B cell (primary cell): ENCODE measurements at regions of chr6 and their contacts with region 1.

Region 1: GRCh38 chr6:108848116-108848868 is at the start of gene ARMC2:
- DNase-seq: peak; percentile 95
- ATAC-seq: peak; percentile 93
- H3K4me3 ChIP-seq: peak within 1 kb of the TSS; percentile 53 to 85 (median 78)
- H3K4me3 Mint-ChIP-seq: peak within 1 kb of the TSS; percentile 93
- H3K27ac ChIP-seq: peak within 1 kb of the TSS; percentile 48 to 77
- H3K27ac Mint-ChIP-seq: peak within 1 kb of the TSS; percentile 94
- H3K4me1 ChIP-seq: peaks cover 9 to 12% of the 10 kb centered on the region in 2 donors
- H3K4me1 Mint-ChIP-seq: peaks cover 13% of the 10 kb centered on the region
- H3K27me3 ChIP-seq: peaks cover 0 to 2% (median 0%) of the 10 kb centered on the region in 4 experiments
- H3K27me3 Mint-ChIP-seq: no peaks in the 10 kb centered on the region
- CTCF ChIP-seq: no peak
- total RNA-seq, gene ARMC2: 4.9 and 9.9 TPM in 2 replicates

Region 2: DNA sequence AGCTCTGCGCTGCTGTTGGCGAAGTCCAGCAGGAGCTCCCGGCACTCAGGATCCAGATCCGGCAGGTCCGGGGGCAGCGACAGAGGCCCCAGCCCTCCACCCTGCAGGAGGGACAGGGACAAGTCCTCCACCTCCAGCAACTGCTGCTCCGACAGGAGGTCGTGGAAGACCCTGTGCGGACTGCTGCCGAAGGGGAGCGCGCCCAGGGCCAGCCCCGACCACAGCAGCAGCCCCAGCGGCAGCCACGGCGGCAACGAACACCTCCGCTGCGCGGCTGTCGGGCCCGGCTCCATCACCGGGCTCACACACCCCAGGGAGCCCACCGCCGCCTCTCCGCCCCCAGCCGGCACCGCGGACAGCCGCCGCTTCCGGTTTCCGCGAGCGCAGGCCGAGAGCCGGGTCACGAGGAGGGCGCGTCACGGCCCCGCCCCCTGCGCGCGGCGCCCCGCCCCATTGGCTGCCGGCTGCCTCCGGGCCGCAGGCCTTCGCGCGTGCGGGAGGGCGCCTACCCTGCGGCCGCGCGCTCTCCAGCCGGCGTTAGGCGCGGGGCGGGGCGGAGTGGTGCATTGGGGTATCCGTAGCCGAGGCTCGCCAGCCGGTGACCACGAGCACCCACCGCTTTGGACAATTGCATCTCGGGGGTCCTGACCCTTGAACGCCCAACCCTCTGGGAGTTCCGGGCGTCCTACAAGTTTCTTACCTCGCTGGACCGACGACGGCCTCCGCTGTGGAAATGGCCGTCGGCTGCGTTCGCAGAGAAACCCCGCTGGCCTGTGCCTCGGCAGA is 773.7 kb before region 1 on chr6 and contains the start of gene OSTM1:
- CTCF ChIA-PET with region 1: no interaction called
- POLR2A ChIA-PET with region 1: no interaction called
- intact Hi-C with region 1: loop called (anchors 1 kb)
- DNase-seq: peak; percentile 95
- ATAC-seq: peak; percentile 96
- H3K4me3 ChIP-seq: peak within 1 kb of the TSS; percentile 75 to 96 (median 90)
- H3K4me3 Mint-ChIP-seq: peak within 1 kb of the TSS; percentile 89
- H3K27ac ChIP-seq: peak within 1 kb of the TSS; percentile 78 to 91
- H3K27ac Mint-ChIP-seq: peak within 1 kb of the TSS; percentile 93
- H3K4me1 ChIP-seq: peaks cover 15 to 18% of the 10 kb centered on the region in 2 donors
- H3K4me1 Mint-ChIP-seq: peaks cover 29% of the 10 kb centered on the region
- H3K27me3 ChIP-seq: no peaks in the 10 kb centered on the region
- H3K27me3 Mint-ChIP-seq: peaks cover 5% of the 10 kb centered on the region
- CTCF ChIP-seq: no peak
- total RNA-seq, gene OSTM1: 33.2 and 41.7 TPM in 2 replicates

Region 3: GRCh38 chr6:108558372-108559096 is 289.8 kb before region 1 on chr6:
- CTCF ChIA-PET with region 1: interaction called, 5 read pairs
- POLR2A ChIA-PET with region 1: interaction called, 7 read pairs
- intact Hi-C with region 1: loop called (anchors 1 kb)
- DNase-seq: peak; percentile 99
- ATAC-seq: peak; percentile 64
- H3K4me3 ChIP-seq: peak overlapping the region; percentile 83 to 98 (median 96)
- H3K4me3 Mint-ChIP-seq: peak overlapping the region; percentile 100
- H3K27ac ChIP-seq: peak overlapping the region; percentile 100
- H3K27ac Mint-ChIP-seq: peak overlapping the region; percentile 100
- H3K4me1 ChIP-seq: peaks cover 17 to 20% of the 10 kb centered on the region in 2 donors
- H3K4me1 Mint-ChIP-seq: peaks cover 22% of the 10 kb centered on the region
- H3K27me3 ChIP-seq: peaks cover 0 to 6% (median 0%) of the 10 kb centered on the region in 4 experiments
- H3K27me3 Mint-ChIP-seq: peaks cover 5% of the 10 kb centered on the region
- CTCF ChIP-seq: no peak

Region 4: DNA sequence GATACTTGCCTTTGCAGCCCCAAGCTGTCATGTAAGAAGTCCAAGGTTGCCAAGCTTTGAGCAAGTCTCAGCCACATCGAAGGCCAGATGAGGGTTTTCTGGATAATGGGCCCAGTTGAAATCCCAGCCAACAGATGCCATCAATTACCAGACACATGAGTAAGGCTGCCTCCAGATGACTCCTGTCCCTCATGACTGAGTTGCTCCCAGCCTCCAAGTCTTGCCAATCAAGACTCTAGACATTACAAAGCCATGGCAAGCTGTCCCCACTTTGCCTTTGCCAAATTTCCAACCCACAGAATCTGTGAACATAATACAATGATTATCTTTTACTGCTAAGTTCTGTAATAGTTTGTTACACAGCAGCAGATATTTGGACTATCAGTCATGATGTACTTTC is 76.9 kb before region 1 on chr6:
- CTCF ChIA-PET with region 1: no interaction called
- POLR2A ChIA-PET with region 1: no interaction called
- intact Hi-C with region 1: no loop called
- DNase-seq: no peak
- ATAC-seq: no peak
- H3K4me3 ChIP-seq: no peak overlapping the region
- H3K4me3 Mint-ChIP-seq: no peak overlapping the region
- H3K27ac ChIP-seq: no peak overlapping the region
- H3K27ac Mint-ChIP-seq: no peak overlapping the region
- H3K4me1 ChIP-seq: no peaks in the 10 kb centered on the region
- H3K4me1 Mint-ChIP-seq: peaks cover 4% of the 10 kb centered on the region
- H3K27me3 ChIP-seq: peaks cover 0 to 3% (median 0%) of the 10 kb centered on the region in 4 experiments
- H3K27me3 Mint-ChIP-seq: peaks cover 15% of the 10 kb centered on the region
- CTCF ChIP-seq: no peak

Region 5: DNA sequence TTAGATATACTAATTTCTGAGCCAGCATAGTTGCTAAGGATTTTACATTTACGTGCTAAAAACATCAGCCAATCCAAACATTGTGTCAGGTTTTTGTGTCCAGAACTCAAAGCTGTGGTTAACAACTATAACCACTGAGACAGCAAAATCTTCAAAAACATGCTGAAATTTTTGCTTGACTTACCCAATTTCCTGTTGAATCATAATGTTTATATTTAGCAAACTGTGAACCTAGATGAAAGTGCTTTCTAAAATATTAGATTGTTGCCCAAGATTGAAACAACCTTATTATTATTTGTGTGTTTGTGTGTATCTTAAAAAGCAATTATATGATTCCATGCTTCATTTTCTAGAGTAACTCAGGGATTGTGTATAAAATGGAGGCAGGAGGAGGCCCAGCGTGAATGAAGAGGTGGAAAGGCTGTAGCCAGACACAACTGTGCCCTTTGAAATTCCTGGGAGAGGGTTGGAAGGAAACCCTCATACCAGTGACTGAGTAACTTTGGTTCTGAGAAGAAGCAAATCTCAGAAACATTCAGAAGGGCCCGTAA is 47.9 kb after region 1 on chr6:
- CTCF ChIA-PET with region 1: interaction called, 15 read pairs
- POLR2A ChIA-PET with region 1: no interaction called
- intact Hi-C with region 1: no loop called
- DNase-seq: no peak
- ATAC-seq: no peak
- H3K4me3 ChIP-seq: peak overlapping the region in 1 of 5 experiments; percentile 16
- H3K4me3 Mint-ChIP-seq: peak overlapping the region; percentile 2
- H3K27ac ChIP-seq: peak overlapping the region in 1 of 2 donors; percentile 39
- H3K27ac Mint-ChIP-seq: peak overlapping the region; percentile 2
- H3K4me1 ChIP-seq: peaks cover 22 to 28% of the 10 kb centered on the region in 2 donors
- H3K4me1 Mint-ChIP-seq: peaks cover 17% of the 10 kb centered on the region
- H3K27me3 ChIP-seq: no peaks in the 10 kb centered on the region
- H3K27me3 Mint-ChIP-seq: no peaks in the 10 kb centered on the region
- CTCF ChIP-seq: no peak

Region 6: GRCh38 chr6:109009236-109009961 is 161.1 kb after region 1 on chr6:
- CTCF ChIA-PET with region 1: no interaction called
- POLR2A ChIA-PET with region 1: no interaction called
- intact Hi-C with region 1: loop called (anchors 1 kb)
- DNase-seq: peak; percentile 94
- ATAC-seq: peak; percentile 98
- H3K4me3 ChIP-seq: peak overlapping the region; percentile 77 to 97 (median 89)
- H3K4me3 Mint-ChIP-seq: peak overlapping the region; percentile 98
- H3K27ac ChIP-seq: peak overlapping the region; percentile 87 to 90
- H3K27ac Mint-ChIP-seq: peak overlapping the region; percentile 97
- H3K4me1 ChIP-seq: peaks cover 32 to 52% of the 10 kb centered on the region in 2 donors
- H3K4me1 Mint-ChIP-seq: peaks cover 64% of the 10 kb centered on the region
- H3K27me3 ChIP-seq: no peaks in the 10 kb centered on the region
- H3K27me3 Mint-ChIP-seq: no peaks in the 10 kb centered on the region
- CTCF ChIP-seq: no peak